Transverse colon (tissue), 4 donors: ENCODE measurements at regions of chr10 and their contacts with region 1.

Region 1: DNA sequence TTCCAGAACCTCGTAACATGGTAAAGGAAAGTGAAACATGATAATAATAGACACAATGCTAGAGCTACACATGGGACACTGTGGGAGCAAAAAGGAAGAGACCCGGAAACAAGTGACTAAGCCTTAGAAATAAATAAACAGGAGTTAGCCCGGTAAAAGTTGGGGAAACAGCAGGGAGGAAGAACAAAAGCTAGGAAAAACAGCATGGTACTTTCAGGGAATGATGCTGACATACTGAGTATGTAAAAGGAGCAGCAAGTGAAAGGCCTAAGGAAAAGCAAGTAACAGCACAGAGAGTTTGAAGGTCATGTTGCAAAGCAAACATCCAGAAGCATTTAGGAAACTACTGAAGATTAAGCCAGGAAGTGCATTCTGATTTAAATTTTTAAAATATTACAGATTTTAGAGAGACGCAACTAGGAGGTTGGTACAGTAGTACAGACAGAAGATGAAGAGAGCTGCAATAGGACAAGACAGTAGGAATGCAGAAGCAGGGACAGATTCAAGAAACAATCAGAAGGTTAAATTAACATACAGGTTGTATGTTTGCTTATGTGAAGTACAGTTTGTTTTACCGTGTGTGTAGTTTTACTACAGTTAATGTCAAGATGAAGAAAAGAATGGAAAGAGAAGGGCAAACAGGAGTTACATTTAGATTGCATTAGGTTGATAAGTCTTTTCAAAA is 63.7 kb downstream of the ARHGAP12 start:
- DNase-seq: no peak
- H3K4me3 ChIP-seq: peak overlapping the region in 2 of 4 donors; percentile 3 to 18
- H3K27ac ChIP-seq: peak overlapping the region; percentile 52 to 70 (median 69)
- H3K4me1 ChIP-seq: peaks cover 16 to 49% (median 30%) of the 10 kb centered on the region in 4 donors
- H3K27me3 ChIP-seq: no peaks in the 10 kb centered on the region
- CTCF ChIP-seq: no peak
- EP300 ChIP-seq: no peak
- POLR2A ChIP-seq: no peak

Region 2: GRCh38 chr10:31947144-31947926 is 82.4 kb after region 1 on chr10:
- in situ Hi-C with region 1: loop called in 2 of 4 experiments (anchors 10 kb)
- intact Hi-C with region 1: loop called (anchors 10 kb)
- DNase-seq: no peak
- H3K4me3 ChIP-seq: peak overlapping the region in 1 of 4 donors; percentile 23
- H3K27ac ChIP-seq: peak overlapping the region; percentile 64 to 74 (median 71)
- H3K4me1 ChIP-seq: peaks cover 0 to 32% (median 15%) of the 10 kb centered on the region in 4 donors
- H3K27me3 ChIP-seq: no peaks in the 10 kb centered on the region
- CTCF ChIP-seq: peak; percentile 43 to 71 (median 49)
- EP300 ChIP-seq: no peak
- POLR2A ChIP-seq: no peak

Region 3: GRCh38 chr10:32005050-32005449 is 140.1 kb after region 1 on chr10:
- in situ Hi-C with region 1: loop called in 1 of 4 experiments (anchors 25 kb)
- intact Hi-C with region 1: no loop called
- DNase-seq: peak; percentile 27
- H3K4me3 ChIP-seq: no peak overlapping the region
- H3K27ac ChIP-seq: no peak overlapping the region
- H3K4me1 ChIP-seq: peaks cover 0 to 4% (median 0%) of the 10 kb centered on the region in 4 donors
- H3K27me3 ChIP-seq: no peaks in the 10 kb centered on the region
- CTCF ChIP-seq: peak; percentile 35 to 47 (median 46)
- EP300 ChIP-seq: no peak
- POLR2A ChIP-seq: peak; percentile 13

Region 4: DNA sequence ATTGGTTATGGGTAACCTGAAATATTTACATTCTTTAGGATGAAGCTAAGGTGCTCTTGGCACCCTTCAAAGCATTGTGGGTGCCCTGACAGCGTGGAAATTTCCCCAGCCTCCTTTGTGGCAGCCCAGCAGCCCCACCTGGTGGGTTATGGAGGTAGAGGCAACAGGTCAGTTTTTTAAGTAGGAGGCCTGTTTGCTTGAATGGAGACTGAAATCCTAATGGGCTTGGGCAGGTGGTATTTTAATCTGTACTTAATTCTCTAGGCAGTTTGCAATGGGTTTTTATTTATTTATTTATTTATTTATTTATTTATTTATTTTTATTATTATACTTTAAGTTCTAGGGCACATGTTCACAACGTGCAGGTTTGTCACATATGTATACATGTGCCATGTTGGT is 342.6 kb after region 1 on chr10:
- in situ Hi-C with region 1: loop called in 2 of 4 experiments (anchors 25 kb)
- intact Hi-C with region 1: no loop called
- DNase-seq: peak; percentile 73
- H3K4me3 ChIP-seq: no peak overlapping the region
- H3K27ac ChIP-seq: no peak overlapping the region
- H3K4me1 ChIP-seq: no peaks in the 10 kb centered on the region
- H3K27me3 ChIP-seq: no peaks in the 10 kb centered on the region
- CTCF ChIP-seq: peak; percentile 57 to 75 (median 68)
- EP300 ChIP-seq: no peak
- POLR2A ChIP-seq: no peak